Lower leg skin (tissue), 4 donors: ENCODE measurements at regions of chr10 and their contacts with region 1.

Region 1: GRCh38 chr10:132354356-132355094 is 22.5 kb downstream of the LRRC27 start:
- DNase-seq: no peak
- H3K4me3 ChIP-seq: no peak overlapping the region
- CTCF ChIP-seq: no peak
- POLR2A ChIP-seq: no peak

Region 2: DNA sequence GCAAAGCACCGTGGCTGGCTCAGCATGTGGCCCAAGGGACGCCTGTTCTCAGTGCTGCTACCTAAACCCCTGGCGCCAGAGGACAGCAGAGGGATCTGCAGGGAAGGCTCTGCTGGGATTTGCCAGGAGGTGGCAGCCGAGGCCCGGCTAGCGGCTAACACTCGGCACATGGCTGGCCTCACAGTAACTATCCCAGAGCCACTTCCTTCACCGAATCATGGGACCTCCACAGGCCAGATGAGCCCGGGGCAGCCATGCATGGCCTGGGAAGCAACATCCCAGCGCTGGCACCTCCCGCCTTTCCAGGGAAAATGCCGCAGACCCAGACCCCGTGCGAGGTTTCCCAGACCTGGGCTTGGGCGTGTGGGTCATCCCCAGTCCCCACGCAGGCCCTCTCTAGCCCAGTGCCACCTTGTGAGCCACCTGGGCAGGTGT is 131.4 kb before region 1 on chr10:
- intact Hi-C with region 1: loop called (anchors 5 kb)
- DNase-seq: peak; percentile 67 to 94
- H3K4me3 ChIP-seq: no peak overlapping the region
- CTCF ChIP-seq: peak in 1 of 3 donors; percentile 90
- POLR2A ChIP-seq: no peak